ENCODE measurements at regions of chr7 and their contacts with region 1.

Region 1: DNA sequence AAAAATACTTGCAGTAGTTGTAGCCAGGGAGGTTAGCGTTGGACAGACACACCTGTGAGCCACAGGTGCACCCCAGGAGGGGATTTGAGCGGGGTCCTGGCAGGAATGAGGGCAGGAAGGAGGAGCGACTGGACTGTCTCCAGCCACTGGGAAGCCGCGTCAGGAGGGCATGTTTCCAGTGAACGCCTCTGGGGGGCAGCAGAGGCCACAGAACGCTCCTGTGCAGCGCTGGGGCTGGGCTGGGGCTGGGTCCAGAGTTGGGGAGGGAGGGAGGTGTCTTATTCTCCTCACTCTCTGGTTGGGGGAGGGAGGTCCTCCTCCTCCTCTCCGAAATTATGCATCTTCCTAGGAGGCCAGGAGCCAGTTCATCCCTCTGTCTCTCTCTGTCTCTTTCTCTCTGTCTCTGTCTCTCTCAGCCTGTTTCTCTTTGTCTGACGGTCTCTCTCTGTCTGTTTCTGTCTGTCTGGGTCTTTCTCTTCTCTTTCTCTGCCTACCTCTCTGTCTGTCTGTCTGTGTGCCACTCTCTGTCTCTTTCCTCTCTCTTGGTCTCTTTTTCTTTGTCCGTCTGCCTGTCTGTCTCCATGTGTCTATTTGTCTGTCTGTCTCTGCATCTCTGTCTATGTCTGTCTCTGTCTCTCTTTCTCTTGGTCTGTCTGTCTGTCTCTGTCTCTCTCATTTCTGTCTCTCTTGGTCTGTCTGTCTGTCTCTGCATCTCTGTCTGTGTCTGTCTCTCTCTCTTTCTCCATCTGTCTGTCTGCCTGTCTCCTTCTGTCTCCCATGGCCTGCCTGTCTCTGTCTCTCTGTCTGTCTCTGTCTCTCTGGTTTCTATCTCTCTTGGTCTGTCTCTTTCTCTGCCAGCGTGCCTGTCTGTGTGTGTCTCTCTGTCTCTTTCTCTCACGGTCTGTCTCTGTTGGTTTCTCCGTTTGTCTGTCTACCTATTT is 9.9 kb upstream of the PSMG3 start:
- DNase-seq: peak; percentile 93
- H3K4me3 ChIP-seq: no peak overlapping the region
- H3K27ac ChIP-seq: peak overlapping the region in 1 of 2 experiments; percentile 31; a peak in 1 of 4 replicates
- H3K4me1 ChIP-seq: peaks cover 0 to 12% of the 10 kb centered on the region in 2 experiments; a peak in 1 of 4 replicates
- H3K27me3 ChIP-seq: no peaks in the 10 kb centered on the region
- CTCF ChIP-seq: peak; percentile 95
- EP300 ChIP-seq: no peak
- RAD21 ChIP-seq: peak; percentile 98

Region 2: GRCh38 chr7:1638215-1638661 is 58.5 kb after region 1 on chr7:
- CTCF ChIA-PET with region 1: interaction called, 27 read pairs
- POLR2A ChIA-PET with region 1: interaction called, 5 read pairs
- DNase-seq: no peak
- H3K4me3 ChIP-seq: no peak overlapping the region
- H3K27ac ChIP-seq: peak overlapping the region in 1 of 2 experiments; percentile 99; a peak in 2 of 4 replicates
- H3K4me1 ChIP-seq: peaks cover 0 to 52% of the 10 kb centered on the region in 2 experiments; a peak in 1 of 4 replicates
- H3K27me3 ChIP-seq: 0 out of 2 replicates have a peak, but pooled peaks cover 5% of the 10 kb centered on the region
- CTCF ChIP-seq: no peak
- EP300 ChIP-seq: no peak
- RAD21 ChIP-seq: no peak

Region 3: DNA sequence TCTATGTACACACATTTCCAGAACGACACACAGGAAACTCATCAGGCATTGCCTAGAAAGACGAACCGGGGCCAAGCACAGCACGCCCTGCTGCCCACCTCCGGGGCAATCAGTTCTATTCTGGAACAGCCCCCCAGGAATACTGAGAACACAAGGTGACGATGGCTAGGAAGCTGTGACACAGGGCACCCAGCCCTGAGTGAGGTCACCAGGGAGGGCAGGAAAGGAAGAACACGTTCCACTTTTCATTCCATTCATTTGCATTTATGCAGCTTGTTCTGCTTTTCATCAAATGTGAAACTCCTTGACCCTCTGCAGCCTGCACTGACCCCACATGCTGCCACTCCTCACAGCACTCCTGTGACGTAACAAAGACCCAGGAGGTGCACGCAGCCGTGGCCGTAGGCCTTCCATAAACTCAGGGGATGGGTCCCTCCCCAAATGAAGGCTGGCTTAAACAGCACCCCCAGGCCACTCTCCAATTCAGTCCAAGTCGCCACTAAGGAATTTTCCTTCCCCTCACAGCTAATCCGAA is 624.1 kb after region 1 on chr7:
- CTCF ChIA-PET with region 1: interaction called, 12 read pairs
- POLR2A ChIA-PET with region 1: no interaction called
- DNase-seq: peak; percentile 53
- H3K4me3 ChIP-seq: no peak overlapping the region
- H3K27ac ChIP-seq: peak overlapping the region in 1 of 2 experiments; percentile 80; a peak in 2 of 4 replicates
- H3K4me1 ChIP-seq: peaks cover 4 to 35% of the 10 kb centered on the region in 2 experiments; a peak in 2 of 4 replicates
- H3K27me3 ChIP-seq: no peaks in the 10 kb centered on the region
- CTCF ChIP-seq: no peak
- EP300 ChIP-seq: no peak
- RAD21 ChIP-seq: no peak

Region 4: GRCh38 chr7:2373124-2373556 is 793.4 kb after region 1 on chr7:
- CTCF ChIA-PET with region 1: no interaction called
- POLR2A ChIA-PET with region 1: no interaction called
- DNase-seq: no peak
- H3K4me3 ChIP-seq: no peak overlapping the region
- H3K27ac ChIP-seq: no peak overlapping the region
- H3K4me1 ChIP-seq: no peaks in the 10 kb centered on the region
- H3K27me3 ChIP-seq: no peaks in the 10 kb centered on the region
- CTCF ChIP-seq: no peak
- EP300 ChIP-seq: no peak
- RAD21 ChIP-seq: no peak

Measured in SK-N-SH (cell line).